ENCODE measurements at regions of chr3 and their contacts with region 1.

Region 1: DNA sequence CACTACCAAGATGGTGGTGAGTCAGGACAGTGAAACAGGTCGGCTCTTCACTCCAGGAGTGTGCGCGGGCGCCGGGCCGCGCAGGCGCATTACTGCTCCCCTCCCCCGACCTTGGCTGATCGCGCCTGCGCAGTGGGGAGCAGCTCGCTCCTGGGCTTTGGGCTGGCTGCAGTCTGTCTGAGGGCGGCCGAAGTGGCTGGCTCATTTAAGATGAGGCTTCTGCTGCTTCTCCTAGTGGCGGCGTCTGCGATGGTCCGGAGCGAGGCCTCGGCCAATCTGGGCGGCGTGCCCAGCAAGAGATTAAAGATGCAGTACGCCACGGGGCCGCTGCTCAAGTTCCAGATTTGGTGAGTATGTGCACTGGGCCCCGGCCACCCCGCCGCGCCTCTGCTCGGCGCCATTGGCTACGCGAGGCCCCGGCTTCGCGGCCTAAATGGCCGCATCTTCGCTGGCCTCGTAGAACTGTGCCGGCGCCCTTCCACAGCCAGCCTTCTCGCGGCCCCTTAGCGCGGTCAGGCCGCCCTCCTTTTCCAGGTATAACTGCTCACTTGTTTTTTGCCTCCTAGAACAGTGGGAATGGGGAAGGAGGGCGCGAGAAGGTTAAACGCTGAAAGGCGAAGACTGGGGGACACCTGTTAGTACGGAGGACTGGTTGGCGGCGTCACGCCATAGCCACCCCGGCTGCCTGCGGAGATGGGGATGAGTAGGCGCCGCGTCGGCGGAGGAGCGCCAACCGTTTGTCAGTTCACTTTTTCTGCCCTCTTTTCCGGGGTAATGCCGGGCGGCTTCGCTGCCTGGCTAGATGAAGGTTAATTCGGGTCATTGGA is at the start of gene SELENOT:
- DNase-seq: peak; percentile 94 to 96
- H3K4me3 ChIP-seq: peak within 1 kb of the TSS; percentile 54
- H3K4me3 Mint-ChIP-seq: peak within 1 kb of the TSS; percentile 98
- H3K27ac Mint-ChIP-seq: peak within 1 kb of the TSS; percentile 88
- H3K4me1 ChIP-seq: peaks cover 37% of the 10 kb centered on the region
- H3K4me1 Mint-ChIP-seq: peaks cover 37% of the 10 kb centered on the region
- H3K27me3 ChIP-seq: no peaks in the 10 kb centered on the region
- H3K27me3 Mint-ChIP-seq: no peaks in the 10 kb centered on the region
- CTCF ChIP-seq: peak in 1 of 2 experiments; percentile 33
- total RNA-seq, gene SELENOT: 121 and 124 TPM in 2 replicates

Region 2: GRCh38 chr3:149969940-149970715 is 633.2 kb before region 1 on chr3:
- CTCF ChIA-PET with region 1: no interaction called
- POLR2A ChIA-PET with region 1: no interaction called
- intact Hi-C with region 1: loop called (anchors 5 kb)
- DNase-seq: peak; percentile 77 to 84
- H3K4me3 ChIP-seq: peak overlapping the region; percentile 91
- H3K4me3 Mint-ChIP-seq: peak overlapping the region; percentile 78
- H3K27ac Mint-ChIP-seq: peak overlapping the region; percentile 84
- H3K4me1 ChIP-seq: no peaks in the 10 kb centered on the region
- H3K4me1 Mint-ChIP-seq: no peaks in the 10 kb centered on the region
- H3K27me3 ChIP-seq: no peaks in the 10 kb centered on the region
- H3K27me3 Mint-ChIP-seq: peaks cover 3% of the 10 kb centered on the region
- CTCF ChIP-seq: no peak

Region 3: DNA sequence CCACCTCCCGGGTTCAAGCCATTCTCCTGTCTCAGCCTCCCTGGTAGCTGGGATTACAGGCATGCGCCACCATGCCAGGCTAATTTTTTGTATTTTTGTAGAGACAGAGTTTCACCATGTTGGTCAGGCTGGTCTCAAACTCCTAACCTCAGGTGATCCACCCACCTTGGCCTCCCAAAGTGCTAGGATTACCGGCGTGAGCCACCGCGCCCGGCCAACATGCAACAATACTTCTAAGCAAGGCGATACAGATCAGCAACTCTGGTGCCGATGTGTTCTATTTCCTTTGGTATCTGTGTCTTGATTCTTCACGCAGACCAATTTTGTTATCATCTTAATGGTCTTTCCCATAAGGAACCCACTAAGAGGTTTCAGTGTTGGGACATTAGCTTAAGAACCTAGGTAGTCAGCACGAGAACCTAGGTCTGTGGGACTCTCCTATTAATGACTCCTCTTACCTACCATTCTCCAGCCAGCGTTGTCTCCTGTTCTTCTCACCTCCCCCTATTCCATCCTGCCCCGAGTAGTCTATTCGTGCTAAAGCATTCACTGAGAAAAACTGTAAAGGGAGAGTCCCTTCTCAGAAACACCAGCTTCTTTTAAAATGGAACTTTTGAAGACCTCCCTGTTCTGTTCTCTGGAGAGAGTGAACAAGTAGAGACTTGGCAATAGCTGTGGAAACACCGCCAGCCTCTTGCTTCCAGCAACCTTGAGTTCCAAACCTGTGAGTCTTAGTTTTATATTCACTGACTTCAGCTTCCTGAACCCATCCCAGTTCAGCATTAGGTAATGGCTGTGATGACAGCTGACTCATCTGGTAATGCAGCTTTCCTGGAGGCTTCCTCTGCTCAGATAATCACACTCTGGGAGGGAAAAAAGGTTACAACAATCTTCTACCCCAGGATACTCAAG is 134.1 kb before region 1 on chr3:
- CTCF ChIA-PET with region 1: no interaction called
- POLR2A ChIA-PET with region 1: no interaction called
- intact Hi-C with region 1: no loop called
- DNase-seq: peak; percentile 43 to 53
- H3K4me3 ChIP-seq: no peak overlapping the region
- H3K4me3 Mint-ChIP-seq: peak overlapping the region; percentile 39
- H3K27ac Mint-ChIP-seq: peak overlapping the region; percentile 94
- H3K4me1 ChIP-seq: peaks cover 33% of the 10 kb centered on the region
- H3K4me1 Mint-ChIP-seq: peaks cover 25% of the 10 kb centered on the region
- H3K27me3 ChIP-seq: no peaks in the 10 kb centered on the region
- H3K27me3 Mint-ChIP-seq: no peaks in the 10 kb centered on the region
- CTCF ChIP-seq: no peak

Region 4: DNA sequence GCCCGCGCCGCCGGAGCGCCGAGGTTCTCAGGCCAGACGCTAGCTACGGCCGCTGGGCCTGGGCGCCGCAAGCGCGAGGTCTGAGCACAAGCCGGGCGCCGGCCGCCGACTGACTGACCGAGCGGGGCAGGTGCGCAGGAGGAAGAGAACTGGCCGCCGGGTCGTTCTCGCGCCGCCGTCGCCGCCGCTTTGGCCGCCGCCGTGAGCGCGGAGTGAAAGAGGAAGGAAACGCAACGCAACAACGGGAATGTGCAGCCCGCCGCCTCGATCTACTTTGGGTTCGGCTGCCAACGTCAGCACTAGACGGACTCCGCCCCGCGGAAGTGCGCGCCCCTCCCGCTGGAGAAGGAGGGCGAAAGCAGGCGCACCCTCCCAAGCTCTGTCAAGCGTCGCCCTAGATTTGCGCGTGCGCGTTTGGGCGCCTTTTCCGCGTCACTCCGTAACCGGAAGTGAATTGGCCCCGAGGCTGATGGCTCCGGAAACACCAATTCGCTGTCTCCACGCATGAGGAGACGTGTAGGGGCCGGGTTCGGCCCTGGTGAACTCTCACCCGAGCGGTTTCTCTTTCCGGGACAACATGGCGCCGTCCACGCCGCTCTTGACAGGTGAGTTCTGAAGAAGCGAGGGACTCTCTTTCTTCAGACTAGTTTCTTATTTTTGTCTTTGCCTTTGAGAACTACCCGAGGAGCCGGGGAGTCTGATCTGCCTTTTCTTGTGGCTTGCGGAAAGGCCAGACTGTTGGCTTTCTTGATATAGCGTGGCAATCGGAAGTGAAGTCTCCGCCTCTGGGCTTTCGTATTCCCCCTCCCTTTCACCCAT is 56.9 kb before region 1 on chr3 and contains the starts of genes EIF2A and SERP1:
- CTCF ChIA-PET with region 1: no interaction called
- POLR2A ChIA-PET with region 1: interaction called, 4 read pairs
- intact Hi-C with region 1: loop called (anchors 1 kb)
- DNase-seq: peak; percentile 98
- H3K4me3 ChIP-seq: peak within 1 kb of the TSS; percentile 99
- H3K4me3 Mint-ChIP-seq: peak within 1 kb of the TSS; percentile 87
- H3K27ac Mint-ChIP-seq: peak within 1 kb of the TSS; percentile 99
- H3K4me1 ChIP-seq: peaks cover 11% of the 10 kb centered on the region
- H3K4me1 Mint-ChIP-seq: peaks cover 6% of the 10 kb centered on the region
- H3K27me3 ChIP-seq: no peaks in the 10 kb centered on the region
- H3K27me3 Mint-ChIP-seq: no peaks in the 10 kb centered on the region
- CTCF ChIP-seq: no peak
- total RNA-seq, gene EIF2A: 97.1 and 103 TPM in 2 replicates
- total RNA-seq, gene SERP1: 89.4 and 90.8 TPM in 2 replicates

Region 5: GRCh38 chr3:150703299-150704134 is 100.2 kb after region 1 on chr3 and contains the start of gene ERICH6:
- CTCF ChIA-PET with region 1: interaction called, 4 read pairs
- POLR2A ChIA-PET with region 1: interaction called, 6 read pairs
- intact Hi-C with region 1: loop called (anchors 5 kb)
- DNase-seq: peak; percentile 90 to 93
- H3K4me3 ChIP-seq: peak within 1 kb of the TSS; percentile 52
- H3K4me3 Mint-ChIP-seq: peak within 1 kb of the TSS; percentile 95
- H3K27ac Mint-ChIP-seq: peak within 1 kb of the TSS; percentile 96
- H3K4me1 ChIP-seq: no peaks in the 10 kb centered on the region
- H3K4me1 Mint-ChIP-seq: no peaks in the 10 kb centered on the region
- H3K27me3 ChIP-seq: no peaks in the 10 kb centered on the region
- H3K27me3 Mint-ChIP-seq: peaks cover 3% of the 10 kb centered on the region
- CTCF ChIP-seq: no peak
- total RNA-seq, gene ERICH6: not detected in 2 replicates

Region 6: DNA sequence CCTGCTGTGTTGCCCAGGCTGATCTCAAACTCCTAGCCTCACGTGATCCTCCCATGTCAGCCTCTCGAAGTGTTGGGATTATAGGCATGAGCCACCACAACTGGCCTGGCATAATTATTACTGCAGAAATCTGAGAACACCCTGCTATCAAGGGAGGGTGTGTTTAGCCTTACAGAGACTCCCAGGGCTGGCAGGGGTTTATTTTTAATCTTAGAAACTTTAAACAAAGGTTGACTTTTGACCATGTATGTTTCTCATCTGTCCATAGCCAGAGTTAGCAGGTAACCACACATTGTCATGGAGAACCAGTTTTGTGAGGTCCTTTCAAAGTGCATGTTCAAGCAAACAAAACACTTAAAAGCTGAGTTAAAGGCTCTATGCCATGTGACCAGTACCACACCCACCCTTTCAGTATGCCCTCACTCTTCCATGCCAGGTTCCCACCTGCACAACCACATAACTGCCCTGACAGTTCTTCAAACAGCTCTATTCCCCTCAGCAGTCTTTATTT is 148.4 kb after region 1 on chr3:
- CTCF ChIA-PET with region 1: no interaction called
- POLR2A ChIA-PET with region 1: no interaction called
- intact Hi-C with region 1: no loop called
- DNase-seq: peak in 1 of 2 experiments; percentile 44
- H3K4me3 ChIP-seq: no peak overlapping the region
- H3K4me3 Mint-ChIP-seq: no peak overlapping the region
- H3K27ac Mint-ChIP-seq: no peak overlapping the region
- H3K4me1 ChIP-seq: peaks cover 16% of the 10 kb centered on the region
- H3K4me1 Mint-ChIP-seq: peaks cover 10% of the 10 kb centered on the region
- H3K27me3 ChIP-seq: no peaks in the 10 kb centered on the region
- H3K27me3 Mint-ChIP-seq: no peaks in the 10 kb centered on the region
- CTCF ChIP-seq: no peak

Region 7: GRCh38 chr3:150763122-150763841 is 159.9 kb after region 1 on chr3 and contains the start of gene SIAH2:
- CTCF ChIA-PET with region 1: no interaction called
- POLR2A ChIA-PET with region 1: interaction called, 11 read pairs
- intact Hi-C with region 1: loop called (anchors 5 kb)
- DNase-seq: peak; percentile 91 to 92
- H3K4me3 ChIP-seq: peak within 1 kb of the TSS; percentile 95
- H3K4me3 Mint-ChIP-seq: peak within 1 kb of the TSS; percentile 89
- H3K27ac Mint-ChIP-seq: peak within 1 kb of the TSS; percentile 96
- H3K4me1 ChIP-seq: peaks cover 35% of the 10 kb centered on the region
- H3K4me1 Mint-ChIP-seq: peaks cover 7% of the 10 kb centered on the region
- H3K27me3 ChIP-seq: no peaks in the 10 kb centered on the region
- H3K27me3 Mint-ChIP-seq: no peaks in the 10 kb centered on the region
- CTCF ChIP-seq: no peak
- total RNA-seq, gene SIAH2: 25.6 and 31.8 TPM in 2 replicates

Region 8: GRCh38 chr3:150783920-150784746 is 180.8 kb after region 1 on chr3:
- CTCF ChIA-PET with region 1: no interaction called
- POLR2A ChIA-PET with region 1: no interaction called
- intact Hi-C with region 1: no loop called
- DNase-seq: no peak
- H3K4me3 ChIP-seq: no peak overlapping the region
- H3K4me3 Mint-ChIP-seq: no peak overlapping the region
- H3K27ac Mint-ChIP-seq: no peak overlapping the region
- H3K4me1 ChIP-seq: no peaks in the 10 kb centered on the region
- H3K4me1 Mint-ChIP-seq: no peaks in the 10 kb centered on the region
- H3K27me3 ChIP-seq: no peaks in the 10 kb centered on the region
- H3K27me3 Mint-ChIP-seq: peaks cover 3% of the 10 kb centered on the region
- CTCF ChIP-seq: no peak

Region 9: DNA sequence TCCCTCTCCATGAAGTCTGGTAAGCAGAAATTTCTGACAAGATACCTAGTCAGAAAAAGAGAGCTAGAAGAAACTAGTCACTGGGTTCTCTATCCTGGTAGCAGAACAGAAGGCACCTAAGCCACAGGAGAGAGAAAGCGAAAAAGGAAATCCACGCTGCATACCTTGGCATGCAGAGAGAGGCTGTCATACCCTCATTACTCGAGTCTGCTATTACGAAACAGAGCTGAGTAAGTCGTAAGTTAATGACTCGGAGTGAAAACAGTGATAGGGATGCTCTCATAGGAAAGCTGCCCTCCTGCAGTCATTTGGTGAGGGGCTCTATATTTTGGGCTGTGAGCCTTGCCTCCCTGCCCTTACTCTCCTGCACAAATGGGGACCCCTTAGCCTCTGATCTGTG is 353.0 kb after region 1 on chr3:
- CTCF ChIA-PET with region 1: no interaction called
- POLR2A ChIA-PET with region 1: interaction called, 14 read pairs
- intact Hi-C with region 1: no loop called
- DNase-seq: no peak
- H3K4me3 ChIP-seq: no peak overlapping the region
- H3K4me3 Mint-ChIP-seq: no peak overlapping the region
- H3K27ac Mint-ChIP-seq: no peak overlapping the region
- H3K4me1 ChIP-seq: no peaks in the 10 kb centered on the region
- H3K4me1 Mint-ChIP-seq: no peaks in the 10 kb centered on the region
- H3K27me3 ChIP-seq: no peaks in the 10 kb centered on the region
- H3K27me3 Mint-ChIP-seq: peaks cover 36% of the 10 kb centered on the region
- CTCF ChIP-seq: no peak

Measured in Caco-2 (cell line).